Heart right ventricle (tissue), 16 donors: ENCODE measurements at regions of chr3 and their contacts with region 1.

Region 1: GRCh38 chr3:53255775-53256703 is at the start of gene TKT:
- DNase-seq: peak; percentile 83 to 89
- ATAC-seq: peak; percentile 80 to 90 (median 86)
- H3K4me3 ChIP-seq: peak within 1 kb of the TSS; percentile 61 to 95 (median 77)
- H3K27ac ChIP-seq: peak within 1 kb of the TSS; percentile 23 to 95 (median 90)
- H3K4me1 ChIP-seq: peaks cover 14 to 54% (median 45%) of the 10 kb centered on the region in 9 donors
- H3K27me3 ChIP-seq: no peaks in the 10 kb centered on the region
- CTCF ChIP-seq: no peak
- total RNA-seq, gene TKT: 16.5 to 81.8 (median 25.1) TPM

Region 2: DNA sequence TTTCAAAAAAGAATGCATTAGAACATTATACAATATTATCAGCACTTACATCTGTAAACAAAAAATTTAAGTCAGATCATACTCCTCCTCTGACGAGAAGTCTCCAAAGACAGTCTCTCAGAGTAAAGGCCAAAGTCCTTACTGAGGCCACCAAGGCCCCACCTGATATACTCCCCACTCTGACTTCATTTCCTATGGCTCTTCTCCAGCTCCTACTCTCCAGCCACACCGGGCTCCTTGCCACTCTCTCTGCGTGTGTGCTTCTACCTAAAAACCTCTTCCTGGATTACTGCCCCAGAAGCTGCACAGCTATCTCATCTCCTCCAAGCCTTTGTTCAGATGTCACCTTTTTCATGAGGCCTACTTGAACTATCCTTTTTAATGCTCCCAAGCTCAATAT is 86.3 kb after region 1 on chr3:
- intact Hi-C with region 1: loop called in 2 of 10 experiments (anchors 5 to 10 kb)
- DNase-seq: peak; percentile 28 to 32
- ATAC-seq: peak; percentile 36 to 81 (median 63)
- H3K4me3 ChIP-seq: no peak overlapping the region
- H3K27ac ChIP-seq: peak overlapping the region in 6 of 10 donors; percentile 15 to 59 (median 54)
- H3K4me1 ChIP-seq: peaks cover 0 to 60% (median 48%) of the 10 kb centered on the region in 9 donors
- H3K27me3 ChIP-seq: no peaks in the 10 kb centered on the region
- CTCF ChIP-seq: no peak